Naive thymus-derived CD4-positive, alpha-beta T cell (primary cell): ENCODE measurements at regions of chr4 and their contacts with region 1.

Region 1: DNA sequence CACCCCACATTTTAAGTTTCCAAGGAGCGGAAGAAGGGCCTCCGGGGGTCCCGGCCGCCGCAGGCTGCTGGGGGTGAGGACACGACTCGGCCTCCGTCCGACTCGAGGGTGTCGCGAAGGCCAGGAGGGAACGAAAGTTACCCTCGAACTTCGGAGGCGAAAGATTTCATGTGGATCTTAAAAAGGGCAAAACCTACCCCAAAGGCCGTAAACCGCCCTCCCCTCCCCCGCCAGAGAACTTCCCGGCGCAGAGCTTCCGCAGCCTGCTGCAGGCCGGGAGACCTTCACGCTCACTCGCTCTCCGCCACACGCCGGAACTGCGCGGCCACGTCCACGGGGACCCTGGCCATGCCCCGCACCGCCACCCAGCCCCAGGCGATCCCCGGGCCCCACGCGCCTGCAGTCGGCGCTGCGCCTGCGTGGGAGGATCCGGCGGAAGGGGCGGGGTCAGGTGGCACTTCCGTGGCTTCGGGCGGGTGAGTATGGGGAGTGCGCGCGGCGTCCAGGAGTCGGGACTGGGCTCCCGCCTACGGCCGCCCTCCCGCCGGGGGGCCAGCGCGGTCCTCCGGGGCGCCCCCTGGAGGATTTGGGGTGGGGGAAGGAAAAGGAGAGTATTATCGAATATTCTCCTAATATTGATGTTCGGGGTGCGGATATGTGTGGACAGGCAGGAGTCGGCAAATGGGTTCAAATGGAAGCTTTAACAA is at the start of gene MMAA:
- DNase-seq: peak; percentile 90 to 99 (median 92)
- ATAC-seq: peak; percentile 97
- H3K4me3 ChIP-seq: peak within 1 kb of the TSS; percentile 93
- H3K4me3 Mint-ChIP-seq: peak within 1 kb of the TSS; percentile 90 to 99 (median 98)
- H3K27ac ChIP-seq: peak within 1 kb of the TSS; percentile 94
- H3K27ac Mint-ChIP-seq: peak within 1 kb of the TSS; percentile 95 to 100 (median 99)
- H3K4me1 ChIP-seq: peaks cover 18 to 29% of the 10 kb centered on the region in 2 donors
- H3K4me1 Mint-ChIP-seq: peaks cover 16 to 55% (median 47%) of the 10 kb centered on the region in 7 donors
- H3K27me3 ChIP-seq: no peaks in the 10 kb centered on the region
- H3K27me3 Mint-ChIP-seq: peaks cover 1 to 5% (median 5%) of the 10 kb centered on the region in 5 donors
- total RNA-seq, gene MMAA: 7.2 to 17.3 (median 12.8) TPM

Region 2: GRCh38 chr4:144174401-144175067 is 1444.6 kb before region 1 on chr4:
- CTCF ChIA-PET with region 1: no interaction called
- POLR2A ChIA-PET with region 1: no interaction called
- intact Hi-C with region 1: loop called (anchors 2 kb)
- DNase-seq: peak in 7 of 9 donors; percentile 10 to 62 (median 45)
- ATAC-seq: peak; percentile 63
- H3K4me3 ChIP-seq: no peak overlapping the region
- H3K4me3 Mint-ChIP-seq: peak overlapping the region in 1 of 10 donors; percentile 44
- H3K27ac ChIP-seq: no peak overlapping the region
- H3K27ac Mint-ChIP-seq: peak overlapping the region in 3 of 9 donors; percentile 25 to 84 (median 41)
- H3K4me1 ChIP-seq: peaks cover 0 to 3% of the 10 kb centered on the region in 2 donors
- H3K4me1 Mint-ChIP-seq: peaks cover 0 to 29% (median 4%) of the 10 kb centered on the region in 7 donors
- H3K27me3 ChIP-seq: no peaks in the 10 kb centered on the region
- H3K27me3 Mint-ChIP-seq: peaks cover 0 to 11% (median 9%) of the 10 kb centered on the region in 5 donors

Region 3: GRCh38 chr4:145132511-145133098 is 486.5 kb before region 1 on chr4:
- CTCF ChIA-PET with region 1: no interaction called
- POLR2A ChIA-PET with region 1: no interaction called
- intact Hi-C with region 1: loop called in 1 of 2 experiments (anchors 2 kb)
- DNase-seq: no peak
- ATAC-seq: no peak
- H3K4me3 ChIP-seq: no peak overlapping the region
- H3K4me3 Mint-ChIP-seq: peak overlapping the region in 1 of 10 donors; percentile 52
- H3K27ac ChIP-seq: no peak overlapping the region
- H3K27ac Mint-ChIP-seq: peak overlapping the region; percentile 16 to 87 (median 61)
- H3K4me1 ChIP-seq: peaks cover 0 to 3% of the 10 kb centered on the region in 2 donors
- H3K4me1 Mint-ChIP-seq: peaks cover 9 to 75% (median 31%) of the 10 kb centered on the region in 7 donors
- H3K27me3 ChIP-seq: no peaks in the 10 kb centered on the region
- H3K27me3 Mint-ChIP-seq: no peaks in the 10 kb centered on the region

Region 4: DNA sequence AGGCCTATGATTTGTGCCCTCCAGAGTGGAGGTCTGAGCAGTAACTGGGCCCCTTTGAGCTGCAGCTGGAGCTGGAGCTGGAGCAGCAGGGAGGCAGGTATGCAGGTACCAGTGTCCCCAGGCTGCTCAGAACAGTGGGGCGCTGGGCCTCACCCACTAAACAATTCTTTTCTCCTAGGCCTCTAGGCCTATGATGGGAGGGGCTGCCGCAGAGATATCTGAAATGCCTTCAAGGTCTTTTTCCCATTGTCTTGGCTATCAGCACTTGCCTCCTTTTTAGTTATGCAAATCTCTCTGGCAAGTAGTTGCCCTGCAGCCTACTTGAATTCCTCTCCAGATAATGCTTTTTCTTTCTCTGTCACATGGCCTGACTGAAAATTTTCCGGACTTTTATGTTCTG is 359.0 kb before region 1 on chr4:
- CTCF ChIA-PET with region 1: no interaction called
- POLR2A ChIA-PET with region 1: no interaction called
- intact Hi-C with region 1: no loop called
- DNase-seq: no peak
- ATAC-seq: no peak
- H3K4me3 ChIP-seq: no peak overlapping the region
- H3K4me3 Mint-ChIP-seq: no peak overlapping the region
- H3K27ac ChIP-seq: no peak overlapping the region
- H3K27ac Mint-ChIP-seq: no peak overlapping the region
- H3K4me1 ChIP-seq: no peaks in the 10 kb centered on the region
- H3K4me1 Mint-ChIP-seq: no peaks in the 10 kb centered on the region
- H3K27me3 ChIP-seq: no peaks in the 10 kb centered on the region
- H3K27me3 Mint-ChIP-seq: peaks cover 0 to 5% (median 0%) of the 10 kb centered on the region in 5 donors

Region 5: GRCh38 chr4:145481164-145481941 is 137.7 kb before region 1 on chr4 and contains the start of gene SMAD1:
- CTCF ChIA-PET with region 1: no interaction called
- POLR2A ChIA-PET with region 1: no interaction called
- intact Hi-C with region 1: loop called (anchors 5 kb)
- DNase-seq: peak in 7 of 9 donors; percentile 11 to 53 (median 18)
- ATAC-seq: peak; percentile 76
- H3K4me3 ChIP-seq: peak within 1 kb of the TSS; percentile 58
- H3K4me3 Mint-ChIP-seq: peak within 1 kb of the TSS in 7 of 10 donors; percentile 68 to 91 (median 87)
- H3K27ac ChIP-seq: no peak within 1 kb of the TSS
- H3K27ac Mint-ChIP-seq: peak within 1 kb of the TSS in 4 of 9 donors; percentile 6 to 71 (median 22)
- H3K4me1 ChIP-seq: peaks cover 0 to 4% of the 10 kb centered on the region in 2 donors
- H3K4me1 Mint-ChIP-seq: peaks cover 4 to 15% (median 10%) of the 10 kb centered on the region in 7 donors
- H3K27me3 ChIP-seq: peaks cover 0 to 4% of the 10 kb centered on the region in 2 donors
- H3K27me3 Mint-ChIP-seq: peaks cover 4 to 42% (median 31%) of the 10 kb centered on the region in 5 donors
- total RNA-seq, gene SMAD1: 0.29 to 13.5 (median 1.2) TPM

Region 6: GRCh38 chr4:145808021-145808650 is 189.1 kb after region 1 on chr4:
- CTCF ChIA-PET with region 1: no interaction called
- POLR2A ChIA-PET with region 1: no interaction called
- intact Hi-C with region 1: loop called in 1 of 2 experiments (anchors 1 kb)
- DNase-seq: peak in 1 of 9 donors; percentile 43
- ATAC-seq: peak; percentile 61
- H3K4me3 ChIP-seq: no peak overlapping the region
- H3K4me3 Mint-ChIP-seq: peak overlapping the region in 2 of 10 donors; percentile 13 to 81
- H3K27ac ChIP-seq: no peak overlapping the region
- H3K27ac Mint-ChIP-seq: peak overlapping the region in 2 of 9 donors; percentile 25 to 98
- H3K4me1 ChIP-seq: no peaks in the 10 kb centered on the region
- H3K4me1 Mint-ChIP-seq: peaks cover 0 to 38% (median 0%) of the 10 kb centered on the region in 7 donors
- H3K27me3 ChIP-seq: no peaks in the 10 kb centered on the region
- H3K27me3 Mint-ChIP-seq: no peaks in the 10 kb centered on the region

Region 7: GRCh38 chr4:146175541-146176453 is 556.7 kb after region 1 on chr4 and contains the start of gene LSM6:
- CTCF ChIA-PET with region 1: interaction called, 3 read pairs
- POLR2A ChIA-PET with region 1: no interaction called
- intact Hi-C with region 1: loop called (anchors 1 to 2 kb)
- DNase-seq: peak; percentile 63 to 86 (median 84)
- ATAC-seq: peak; percentile 94
- H3K4me3 ChIP-seq: peak within 1 kb of the TSS; percentile 87
- H3K4me3 Mint-ChIP-seq: peak within 1 kb of the TSS; percentile 88 to 95 (median 92)
- H3K27ac ChIP-seq: peak within 1 kb of the TSS; percentile 94
- H3K27ac Mint-ChIP-seq: peak within 1 kb of the TSS; percentile 82 to 99 (median 97)
- H3K4me1 ChIP-seq: peaks cover 25 to 31% of the 10 kb centered on the region in 2 donors
- H3K4me1 Mint-ChIP-seq: peaks cover 29 to 66% (median 57%) of the 10 kb centered on the region in 7 donors
- H3K27me3 ChIP-seq: no peaks in the 10 kb centered on the region
- H3K27me3 Mint-ChIP-seq: no peaks in the 10 kb centered on the region
- total RNA-seq, gene LSM6: 24.7 to 49.7 (median 46.2) TPM

Region 8: DNA sequence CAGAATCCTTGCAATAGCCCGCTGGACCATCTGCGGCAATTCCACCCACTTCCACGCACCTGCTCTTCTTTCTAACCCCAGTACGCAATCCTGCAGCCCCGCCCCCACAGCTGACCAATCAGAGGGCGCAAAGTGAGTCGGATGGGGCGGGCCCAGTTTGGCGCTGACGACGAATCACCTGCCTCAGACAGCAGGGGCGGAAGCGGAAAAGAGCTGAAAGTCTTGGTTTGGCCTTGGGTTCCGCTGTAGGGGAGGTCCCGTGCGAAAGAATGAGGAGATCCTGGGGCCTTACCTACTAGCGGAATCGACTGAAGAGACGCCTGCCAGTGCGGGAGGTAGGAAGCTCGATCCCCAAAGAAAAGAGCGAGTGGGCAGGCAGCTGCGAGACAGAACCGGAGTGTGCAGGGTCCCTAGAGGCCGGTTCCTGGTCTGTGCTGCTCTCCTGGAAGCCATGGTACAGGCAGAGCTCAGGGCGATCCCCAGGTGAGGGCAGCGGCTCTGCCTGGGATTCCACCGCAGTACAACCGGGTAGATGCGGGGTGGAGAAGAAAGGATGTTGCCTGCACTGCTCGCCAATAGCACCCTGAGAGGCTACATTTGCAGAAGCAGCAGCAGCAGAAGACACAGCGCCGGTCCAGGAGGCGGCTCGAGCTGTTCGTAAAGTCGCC is 1998.2 kb after region 1 on chr4 and contains the start of gene TMEM184C:
- CTCF ChIA-PET with region 1: no interaction called
- POLR2A ChIA-PET with region 1: no interaction called
- intact Hi-C with region 1: loop called (anchors 2 to 10 kb)
- DNase-seq: peak; percentile 97 to 99 (median 98)
- ATAC-seq: peak; percentile 97
- H3K4me3 ChIP-seq: peak within 1 kb of the TSS; percentile 89
- H3K4me3 Mint-ChIP-seq: peak within 1 kb of the TSS; percentile 86 to 98 (median 94)
- H3K27ac ChIP-seq: peak within 1 kb of the TSS; percentile 87
- H3K27ac Mint-ChIP-seq: peak within 1 kb of the TSS; percentile 92 to 99 (median 95)
- H3K4me1 ChIP-seq: peaks cover 21 to 30% of the 10 kb centered on the region in 2 donors
- H3K4me1 Mint-ChIP-seq: peaks cover 21 to 48% (median 33%) of the 10 kb centered on the region in 7 donors
- H3K27me3 ChIP-seq: no peaks in the 10 kb centered on the region
- H3K27me3 Mint-ChIP-seq: peaks cover 0 to 22% (median 4%) of the 10 kb centered on the region in 5 donors
- total RNA-seq, gene TMEM184C: 13.7 to 27.4 (median 19.0) TPM